ENCODE measurements at regions of chr16 and their contacts with region 1.

Region 1: GRCh38 chr16:80526425-80527061 is 14.2 kb upstream of the DYNLRB2 start:
- DNase-seq: peak; percentile 70
- ATAC-seq: peak; percentile 76
- H3K4me3 Mint-ChIP-seq: no peak overlapping the region
- H3K27ac Mint-ChIP-seq: no peak overlapping the region
- H3K4me1 Mint-ChIP-seq: peaks cover 2% of the 10 kb centered on the region
- H3K27me3 Mint-ChIP-seq: no peaks in the 10 kb centered on the region
- CTCF ChIP-seq: peak; percentile 72

Region 2: DNA sequence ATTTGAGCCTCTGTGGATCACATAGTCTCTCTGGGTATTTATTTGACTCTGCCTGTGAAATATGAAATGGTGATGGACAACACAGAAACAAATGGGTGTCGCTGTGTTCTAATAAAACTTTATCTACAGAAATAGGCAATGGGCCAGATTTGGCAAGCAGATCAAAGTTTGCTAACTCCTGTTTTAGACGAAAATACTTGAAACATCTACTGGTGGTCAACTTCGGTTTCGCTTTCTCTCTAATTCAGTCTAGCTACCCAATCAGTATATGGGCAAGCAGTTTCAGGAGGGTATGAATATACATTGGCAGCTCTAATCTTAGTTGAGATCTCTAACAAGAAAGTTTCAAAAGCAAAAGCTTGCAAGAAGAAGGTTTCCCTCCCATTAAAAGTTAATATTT is 45.9 kb before region 1 on chr16:
- CTCF ChIA-PET with region 1: interaction called, 11 read pairs
- POLR2A ChIA-PET with region 1: no interaction called
- intact Hi-C with region 1: no loop called
- DNase-seq: no peak
- ATAC-seq: no peak
- H3K4me3 Mint-ChIP-seq: no peak overlapping the region
- H3K27ac Mint-ChIP-seq: no peak overlapping the region
- H3K4me1 Mint-ChIP-seq: peaks cover 4% of the 10 kb centered on the region
- H3K27me3 Mint-ChIP-seq: peaks cover 11% of the 10 kb centered on the region
- CTCF ChIP-seq: no peak

Region 3: GRCh38 chr16:80580109-80580832 is 53.7 kb after region 1 on chr16:
- CTCF ChIA-PET with region 1: interaction called, 16 read pairs
- POLR2A ChIA-PET with region 1: no interaction called
- intact Hi-C with region 1: no loop called
- DNase-seq: peak; percentile 89
- ATAC-seq: peak; percentile 90
- H3K4me3 Mint-ChIP-seq: peak overlapping the region; percentile 51
- H3K27ac Mint-ChIP-seq: peak overlapping the region; percentile 97
- H3K4me1 Mint-ChIP-seq: peaks cover 53% of the 10 kb centered on the region
- H3K27me3 Mint-ChIP-seq: no peaks in the 10 kb centered on the region
- CTCF ChIP-seq: no peak

Region 4: GRCh38 chr16:80623356-80623755 is 96.8 kb after region 1 on chr16:
- CTCF ChIA-PET with region 1: interaction called, 11 read pairs
- POLR2A ChIA-PET with region 1: no interaction called
- intact Hi-C with region 1: no loop called
- DNase-seq: no peak
- ATAC-seq: no peak
- H3K4me3 Mint-ChIP-seq: no peak overlapping the region
- H3K27ac Mint-ChIP-seq: no peak overlapping the region
- H3K4me1 Mint-ChIP-seq: no peaks in the 10 kb centered on the region
- H3K27me3 Mint-ChIP-seq: no peaks in the 10 kb centered on the region
- CTCF ChIP-seq: no peak

Region 5: DNA sequence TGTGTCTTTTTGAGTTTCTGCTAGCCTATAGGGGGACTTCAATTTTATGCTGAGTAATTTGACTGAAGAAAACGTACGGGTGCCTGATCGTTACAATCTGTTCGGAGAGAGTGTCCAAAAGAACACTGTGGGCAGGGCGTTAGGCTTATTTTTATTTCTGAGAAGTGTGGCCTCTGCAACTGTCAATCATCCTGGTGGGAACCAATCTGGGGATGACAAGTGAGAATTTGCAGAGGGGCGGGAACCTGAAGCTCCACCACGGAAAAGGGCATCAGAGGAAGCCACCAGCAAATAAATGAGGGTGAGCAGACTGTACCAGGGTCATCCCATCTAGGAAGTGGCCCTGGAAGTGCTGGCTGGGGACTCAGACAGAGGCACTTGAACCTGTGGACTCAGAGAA is 289.8 kb after region 1 on chr16:
- CTCF ChIA-PET with region 1: interaction called, 23 read pairs
- POLR2A ChIA-PET with region 1: no interaction called
- intact Hi-C with region 1: no loop called
- DNase-seq: no peak
- ATAC-seq: no peak
- H3K4me3 Mint-ChIP-seq: no peak overlapping the region
- H3K27ac Mint-ChIP-seq: no peak overlapping the region
- H3K4me1 Mint-ChIP-seq: no peaks in the 10 kb centered on the region
- H3K27me3 Mint-ChIP-seq: peaks cover 6% of the 10 kb centered on the region
- CTCF ChIP-seq: no peak